Activated CD4-positive, alpha-beta memory T cell treated with anti-CD3 and anti-CD28 coated beads for 36 hours (primary cell): ENCODE measurements at regions of chr3 and their contacts with region 1.

Region 1: GRCh38 chr3:30347679-30348216 is 258.7 kb upstream of the TGFBR2 start:
- DNase-seq: peak; percentile 72
- H3K4me3 Mint-ChIP-seq: peak overlapping the region; percentile 38
- H3K27ac Mint-ChIP-seq: peak overlapping the region; percentile 75
- H3K4me1 Mint-ChIP-seq: peaks cover 72% of the 10 kb centered on the region
- H3K27me3 Mint-ChIP-seq: peaks cover 14% of the 10 kb centered on the region

Region 2: GRCh38 chr3:29280404-29281093 is 1067.2 kb before region 1 on chr3 and contains the start of gene RBMS3:
- CTCF ChIA-PET with region 1: no interaction called
- POLR2A ChIA-PET with region 1: no interaction called
- intact Hi-C with region 1: loop called (anchors 5 kb)
- DNase-seq: peak; percentile 17
- H3K4me3 Mint-ChIP-seq: peak within 1 kb of the TSS; percentile 64
- H3K27ac Mint-ChIP-seq: peak within 1 kb of the TSS; percentile 57
- H3K4me1 Mint-ChIP-seq: peaks cover 24% of the 10 kb centered on the region
- H3K27me3 Mint-ChIP-seq: peaks cover 13% of the 10 kb centered on the region
- total RNA-seq, gene RBMS3: 1.6 TPM

Region 3: GRCh38 chr3:30231277-30232141 is 116.2 kb before region 1 on chr3:
- CTCF ChIA-PET with region 1: no interaction called
- POLR2A ChIA-PET with region 1: no interaction called
- intact Hi-C with region 1: no loop called
- DNase-seq: no peak
- H3K4me3 Mint-ChIP-seq: no peak overlapping the region
- H3K27ac Mint-ChIP-seq: no peak overlapping the region
- H3K4me1 Mint-ChIP-seq: peaks cover 11% of the 10 kb centered on the region
- H3K27me3 Mint-ChIP-seq: no peaks in the 10 kb centered on the region

Region 4: DNA sequence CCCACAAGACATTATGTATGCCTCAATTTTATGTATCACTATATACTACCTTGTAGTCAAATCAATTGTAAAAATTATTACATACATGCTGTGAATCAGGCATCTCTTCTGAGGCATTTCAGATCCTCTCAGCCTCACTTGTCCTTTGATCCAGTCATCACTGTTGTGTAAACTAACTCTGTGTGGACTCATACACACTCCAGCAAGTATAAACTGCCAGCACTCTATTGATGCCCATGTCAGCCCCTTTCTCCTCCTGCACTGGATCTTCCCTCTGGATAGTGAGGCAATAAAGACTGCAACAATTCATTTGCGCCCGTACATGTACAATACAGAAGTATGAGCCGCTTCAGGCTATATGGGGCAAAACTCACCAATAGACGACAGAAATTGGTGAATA is 106.0 kb before region 1 on chr3:
- CTCF ChIA-PET with region 1: no interaction called
- POLR2A ChIA-PET with region 1: no interaction called
- intact Hi-C with region 1: no loop called
- DNase-seq: no peak
- H3K4me3 Mint-ChIP-seq: no peak overlapping the region
- H3K27ac Mint-ChIP-seq: no peak overlapping the region
- H3K4me1 Mint-ChIP-seq: no peaks in the 10 kb centered on the region
- H3K27me3 Mint-ChIP-seq: peaks cover 8% of the 10 kb centered on the region

Region 5: GRCh38 chr3:30426293-30426993 is 78.7 kb after region 1 on chr3:
- CTCF ChIA-PET with region 1: no interaction called
- POLR2A ChIA-PET with region 1: no interaction called
- intact Hi-C with region 1: no loop called
- DNase-seq: no peak
- H3K4me3 Mint-ChIP-seq: no peak overlapping the region
- H3K27ac Mint-ChIP-seq: no peak overlapping the region
- H3K4me1 Mint-ChIP-seq: no peaks in the 10 kb centered on the region
- H3K27me3 Mint-ChIP-seq: no peaks in the 10 kb centered on the region

Region 6: DNA sequence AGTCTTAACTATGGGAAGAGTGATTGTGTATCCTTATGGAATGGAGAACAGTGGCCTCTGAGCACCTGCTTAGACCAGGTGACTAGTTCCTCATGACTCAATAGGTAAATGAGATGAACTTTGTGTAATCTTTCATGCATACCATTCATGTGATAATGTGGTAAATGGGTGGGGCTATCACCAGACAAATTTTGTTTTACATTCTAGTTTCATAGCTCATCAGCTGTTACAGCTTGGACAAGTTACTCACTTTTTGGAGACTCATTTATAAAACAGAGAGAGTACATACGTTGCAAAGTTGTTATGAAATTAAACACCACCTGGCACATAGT is 155.0 kb after region 1 on chr3:
- CTCF ChIA-PET with region 1: no interaction called
- POLR2A ChIA-PET with region 1: no interaction called
- intact Hi-C with region 1: loop called (anchors 1 kb)
- DNase-seq: no peak
- H3K4me3 Mint-ChIP-seq: no peak overlapping the region
- H3K27ac Mint-ChIP-seq: peak overlapping the region; percentile 70
- H3K4me1 Mint-ChIP-seq: peaks cover 46% of the 10 kb centered on the region
- H3K27me3 Mint-ChIP-seq: no peaks in the 10 kb centered on the region

Region 7: GRCh38 chr3:30611613-30612436 is 264.1 kb after region 1 on chr3:
- CTCF ChIA-PET with region 1: no interaction called
- POLR2A ChIA-PET with region 1: no interaction called
- intact Hi-C with region 1: loop called (anchors 2 kb)
- DNase-seq: no peak
- H3K4me3 Mint-ChIP-seq: peak overlapping the region; percentile 86
- H3K27ac Mint-ChIP-seq: peak overlapping the region; percentile 96
- H3K4me1 Mint-ChIP-seq: peaks cover 72% of the 10 kb centered on the region
- H3K27me3 Mint-ChIP-seq: no peaks in the 10 kb centered on the region

Region 8: DNA sequence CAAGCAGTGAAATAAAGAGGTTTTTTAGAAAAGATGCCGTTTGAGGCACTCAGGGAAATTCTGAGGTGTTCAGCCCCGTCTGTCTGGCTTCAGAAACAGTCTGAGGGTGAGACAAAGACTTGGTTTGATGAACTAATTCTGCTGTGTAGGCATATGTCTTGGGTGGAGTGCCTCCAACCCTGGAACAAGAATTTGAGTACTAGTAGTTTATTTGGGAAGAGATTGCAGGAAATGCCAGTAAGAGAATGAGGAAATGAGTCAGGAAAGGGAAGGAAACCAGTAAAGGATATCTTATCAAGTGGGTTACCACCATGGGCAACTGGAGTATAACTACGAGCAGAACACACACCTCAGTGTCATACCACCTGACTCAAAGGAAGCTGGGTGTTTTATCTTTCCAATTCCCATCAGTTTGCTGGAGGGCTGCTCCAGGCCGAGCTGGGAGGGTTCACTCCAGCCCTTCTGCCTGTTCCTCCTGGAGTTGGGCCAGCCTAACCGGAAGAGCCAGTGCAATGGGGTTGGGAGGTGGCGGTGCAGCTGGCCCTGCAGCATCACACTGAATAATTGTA is 334.0 kb after region 1 on chr3:
- CTCF ChIA-PET with region 1: no interaction called
- POLR2A ChIA-PET with region 1: no interaction called
- intact Hi-C with region 1: loop called (anchors 2 kb)
- DNase-seq: no peak
- H3K4me3 Mint-ChIP-seq: no peak overlapping the region
- H3K27ac Mint-ChIP-seq: peak overlapping the region; percentile 65
- H3K4me1 Mint-ChIP-seq: peaks cover 86% of the 10 kb centered on the region
- H3K27me3 Mint-ChIP-seq: no peaks in the 10 kb centered on the region